H1 (cell line): ENCODE measurements at regions of chr14 and their contacts with region 1.

Region 1: DNA sequence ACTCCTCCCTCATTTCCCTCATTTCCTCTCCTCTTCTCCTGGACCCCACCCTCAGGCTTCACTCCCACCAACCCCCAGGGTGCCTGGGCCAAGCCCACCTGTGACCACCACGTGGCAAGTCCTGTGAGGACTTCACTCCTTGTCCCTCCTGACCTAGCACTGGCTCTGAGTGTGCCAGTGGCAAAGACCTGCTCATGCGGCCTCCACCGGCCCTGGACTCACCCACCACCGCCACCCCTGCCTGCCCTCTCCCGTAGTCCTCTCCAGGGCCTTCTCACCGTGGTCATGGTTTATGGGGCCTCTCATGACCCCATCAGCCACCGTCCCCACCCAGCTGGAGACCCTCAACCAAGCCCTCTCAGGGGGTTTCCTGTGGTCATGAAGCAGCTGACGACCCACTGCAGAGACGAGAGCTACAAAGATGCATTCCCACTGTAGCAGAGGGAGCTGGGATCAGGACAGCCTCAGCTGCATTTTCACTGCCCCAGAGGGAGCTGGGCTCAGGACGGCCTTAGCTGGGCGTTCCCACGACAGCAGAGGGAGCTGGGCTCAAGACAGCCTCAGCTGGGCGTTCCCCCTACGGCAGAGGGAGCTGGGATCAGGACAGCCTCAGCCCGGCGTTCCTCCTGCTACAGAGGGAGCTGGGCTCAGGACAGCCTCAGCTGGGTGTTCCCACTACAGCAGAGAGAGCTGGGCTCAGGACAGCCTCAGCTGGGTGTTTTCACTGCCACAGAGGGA is 3.2 kb upstream of the C14orf180 start:
- DNase-seq: no peak
- H3K4me3 ChIP-seq: no peak overlapping the region
- H3K27ac ChIP-seq: no peak overlapping the region
- H3K4me1 ChIP-seq: no peaks in the 10 kb centered on the region
- H3K27me3 ChIP-seq: no peaks in the 10 kb centered on the region
- CTCF ChIP-seq: no peak
- EP300 ChIP-seq: no peak
- POLR2A ChIP-seq: no peak
- RAD21 ChIP-seq: no peak

Region 2: DNA sequence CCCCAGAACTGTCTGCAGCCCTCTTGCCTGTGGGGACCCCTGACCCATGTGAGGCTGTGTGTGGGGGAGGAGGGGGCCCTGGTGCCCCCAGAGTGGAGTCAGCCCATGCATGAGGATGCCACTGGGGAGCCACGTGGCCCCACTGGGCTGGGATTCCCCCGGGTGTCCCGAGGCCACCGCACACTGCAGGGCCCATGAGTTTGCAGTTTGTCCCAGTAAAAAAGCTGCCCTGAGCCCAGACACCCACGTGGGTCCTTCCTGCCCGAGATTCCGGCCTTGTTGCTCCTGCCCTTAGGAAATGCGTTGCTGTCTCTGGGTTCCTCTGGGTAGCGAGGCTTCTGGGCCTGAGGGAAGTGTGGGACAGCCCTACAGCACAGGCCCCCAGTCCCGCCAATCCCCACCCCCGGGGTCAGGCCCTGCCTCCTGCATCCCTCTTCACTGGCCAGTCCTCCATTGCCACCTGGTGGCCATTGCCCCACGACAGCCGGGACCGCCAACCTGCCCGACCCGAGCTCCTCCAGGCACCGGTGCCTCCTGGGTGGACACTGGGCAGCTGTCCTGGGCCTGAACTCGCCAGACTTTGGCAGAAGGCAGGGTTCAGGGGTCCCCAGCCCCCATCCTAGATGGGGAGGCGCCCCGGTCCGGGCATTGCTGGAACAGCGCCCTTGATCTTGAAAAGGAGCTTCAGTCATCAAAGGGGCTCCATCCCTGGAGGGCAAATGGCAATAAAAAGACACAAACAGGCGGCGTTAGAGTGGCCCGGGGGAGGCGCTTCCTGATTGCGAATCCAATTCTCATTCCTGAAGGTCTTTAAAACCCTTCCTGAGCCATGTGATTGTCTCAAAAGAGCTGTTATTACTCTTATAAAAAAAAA is 12.4 kb before region 1 on chr14:
- CTCF ChIA-PET with region 1: interaction called, 18 read pairs
- POLR2A ChIA-PET with region 1: interaction called, 3 read pairs
- DNase-seq: peak; percentile 66 to 96
- H3K4me3 ChIP-seq: no peak overlapping the region
- H3K27ac ChIP-seq: no peak overlapping the region
- H3K4me1 ChIP-seq: peaks cover 0 to 6% (median under 1%) of the 10 kb centered on the region in 4 experiments; a peak in 3 of 7 replicates
- H3K27me3 ChIP-seq: no peaks in the 10 kb centered on the region; a peak in 2 of 7 replicates
- CTCF ChIP-seq: peak in 2 of 3 experiments; percentile 90 to 92; a peak in 3 of 4 replicates
- EP300 ChIP-seq: no peak
- POLR2A ChIP-seq: no peak
- RAD21 ChIP-seq: peak; percentile 97

Region 3: DNA sequence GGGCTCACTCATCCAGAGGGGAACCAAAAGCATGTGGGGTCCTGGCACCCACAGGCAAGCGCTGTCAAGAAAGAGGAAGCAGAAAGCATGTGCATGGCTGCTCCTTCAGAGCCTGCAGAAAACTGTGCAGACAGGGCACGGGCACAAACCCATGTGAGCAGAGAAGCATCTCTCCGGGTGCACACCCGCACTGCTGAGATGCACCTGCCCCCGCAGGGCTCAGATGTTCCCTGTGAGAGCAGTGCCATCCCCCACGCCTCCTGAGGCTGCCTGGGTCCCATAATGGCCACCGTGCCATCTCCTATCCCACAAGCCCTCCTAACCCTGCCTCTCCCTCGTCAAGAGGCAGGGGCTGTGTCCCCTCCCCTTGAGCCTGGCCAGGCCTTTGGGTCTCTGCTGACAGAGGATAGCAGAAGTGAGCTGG is 80.7 kb after region 1 on chr14:
- CTCF ChIA-PET with region 1: no interaction called
- POLR2A ChIA-PET with region 1: no interaction called
- DNase-seq: no peak
- H3K4me3 ChIP-seq: no peak overlapping the region
- H3K27ac ChIP-seq: no peak overlapping the region
- H3K4me1 ChIP-seq: peaks cover 0 to 8% (median 1%) of the 10 kb centered on the region in 4 experiments; a peak in 3 of 7 replicates
- H3K27me3 ChIP-seq: 0 out of 7 replicates have a peak, but pooled peaks cover 0 to 6% (median 2%) of the 10 kb centered on the region in 4 experiments
- CTCF ChIP-seq: no peak
- EP300 ChIP-seq: no peak
- POLR2A ChIP-seq: no peak
- RAD21 ChIP-seq: no peak